ENCODE measurements at regions of chr9 and their contacts with region 1.

Region 1: GRCh38 chr9:121169094-121169601 is 32.5 kb downstream of the RAB14 start:
- DNase-seq: peak; percentile 38
- H3K4me3 Mint-ChIP-seq: no peak overlapping the region
- H3K27ac Mint-ChIP-seq: peak overlapping the region; percentile 76
- H3K4me1 Mint-ChIP-seq: peaks cover 21% of the 10 kb centered on the region
- H3K27me3 Mint-ChIP-seq: no peaks in the 10 kb centered on the region

Region 2: DNA sequence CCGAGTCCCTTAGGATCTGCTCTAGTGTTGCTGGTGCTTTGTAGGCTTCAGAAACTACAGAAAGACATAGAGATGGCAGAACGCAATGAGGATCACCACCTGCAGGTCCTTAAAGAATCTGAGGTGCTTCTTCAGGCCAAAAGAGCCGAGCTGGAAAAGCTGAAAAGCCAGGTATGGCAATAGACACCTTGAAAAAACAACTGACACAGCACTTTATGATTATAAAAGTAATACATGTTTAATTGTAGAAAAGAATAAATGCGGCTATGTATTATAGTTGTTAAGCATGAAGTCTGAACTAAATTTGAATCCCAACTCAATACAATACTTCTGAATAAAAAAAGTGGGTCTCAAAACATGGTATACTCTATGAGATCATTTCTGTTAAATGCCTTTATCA is 11.2 kb before region 1 on chr9:
- CTCF ChIA-PET with region 1: interaction called, 10 read pairs
- POLR2A ChIA-PET with region 1: interaction called, 4 read pairs
- DNase-seq: no peak
- H3K4me3 Mint-ChIP-seq: no peak overlapping the region
- H3K27ac Mint-ChIP-seq: no peak overlapping the region
- H3K4me1 Mint-ChIP-seq: peaks cover 31% of the 10 kb centered on the region
- H3K27me3 Mint-ChIP-seq: no peaks in the 10 kb centered on the region

Region 3: GRCh38 chr9:121206516-121207370 is 37.6 kb after region 1 on chr9:
- CTCF ChIA-PET with region 1: no interaction called
- POLR2A ChIA-PET with region 1: no interaction called
- DNase-seq: no peak
- H3K4me3 Mint-ChIP-seq: no peak overlapping the region
- H3K27ac Mint-ChIP-seq: peak overlapping the region; percentile 78
- H3K4me1 Mint-ChIP-seq: peaks cover 43% of the 10 kb centered on the region
- H3K27me3 Mint-ChIP-seq: no peaks in the 10 kb centered on the region

Region 4: GRCh38 chr9:121424024-121424432 is 254.9 kb after region 1 on chr9:
- CTCF ChIA-PET with region 1: no interaction called
- POLR2A ChIA-PET with region 1: no interaction called
- DNase-seq: no peak
- H3K4me3 Mint-ChIP-seq: no peak overlapping the region
- H3K27ac Mint-ChIP-seq: no peak overlapping the region
- H3K4me1 Mint-ChIP-seq: peaks cover 4% of the 10 kb centered on the region
- H3K27me3 Mint-ChIP-seq: peaks cover 37% of the 10 kb centered on the region